ENCODE measurements at regions of chr18 and their contacts with region 1.

Region 1: GRCh38 chr18:59402432-59403090 is 43.5 kb upstream of the LMAN1 start:
- DNase-seq: peak; percentile 72
- ATAC-seq: peak; percentile 91 to 94
- H3K4me3 ChIP-seq: no peak overlapping the region
- H3K27ac ChIP-seq: no peak overlapping the region
- H3K4me1 ChIP-seq: no peaks in the 10 kb centered on the region
- H3K27me3 ChIP-seq: no peaks in the 10 kb centered on the region
- CTCF ChIP-seq: peak; percentile 89

Region 2: GRCh38 chr18:59155153-59155552 is 247.4 kb before region 1 on chr18:
- intact Hi-C with region 1: no loop called
- DNase-seq: no peak
- ATAC-seq: no peak
- H3K4me3 ChIP-seq: no peak overlapping the region
- H3K27ac ChIP-seq: no peak overlapping the region
- H3K4me1 ChIP-seq: no peaks in the 10 kb centered on the region
- H3K27me3 ChIP-seq: no peaks in the 10 kb centered on the region
- CTCF ChIP-seq: no peak

Region 3: DNA sequence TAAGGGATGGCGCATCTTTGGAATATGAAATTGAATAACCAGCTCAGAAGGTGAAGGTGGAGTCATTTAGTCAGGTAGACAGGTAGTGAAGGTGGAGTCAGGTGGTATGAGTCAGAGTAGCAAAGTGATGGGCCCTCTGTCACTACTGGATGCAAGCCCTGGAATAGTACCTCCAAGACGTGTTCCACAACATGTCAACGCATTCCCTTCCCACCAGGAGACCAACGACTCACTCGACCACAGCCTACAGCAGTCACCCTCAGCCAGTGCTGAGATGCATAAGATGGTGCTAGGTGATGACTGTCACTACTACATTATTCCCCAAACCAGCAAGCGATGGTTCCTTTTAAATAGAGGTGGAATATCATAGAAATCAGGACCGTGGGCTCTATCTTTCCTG is 90.9 kb before region 1 on chr18:
- intact Hi-C with region 1: loop called (anchors 5 kb)
- DNase-seq: no peak
- ATAC-seq: no peak
- H3K4me3 ChIP-seq: no peak overlapping the region
- H3K27ac ChIP-seq: no peak overlapping the region
- H3K4me1 ChIP-seq: peaks cover 6% of the 10 kb centered on the region
- H3K27me3 ChIP-seq: peaks cover 21% of the 10 kb centered on the region
- CTCF ChIP-seq: no peak